GM12878 (cell line): ENCODE measurements at regions of chr14 and their contacts with region 1.

Region 1: DNA sequence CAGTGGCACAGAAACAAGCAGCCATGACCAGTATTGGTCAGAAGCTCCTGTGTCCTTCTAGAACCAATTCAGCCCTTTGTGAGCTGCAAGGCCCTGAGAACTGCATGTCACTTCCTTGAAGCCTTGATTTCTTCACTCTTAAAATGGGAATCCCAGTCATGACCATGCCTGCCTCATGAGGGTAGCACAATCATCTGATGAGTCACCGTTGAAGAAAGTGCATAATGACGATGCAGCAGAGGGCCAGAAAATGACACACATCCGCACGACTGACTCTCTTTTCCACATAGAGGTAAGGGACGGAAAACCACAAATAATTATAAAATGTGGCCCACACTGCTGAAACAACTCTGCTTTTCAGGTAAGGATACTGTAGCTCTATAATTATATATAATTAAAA is 777.4 kb downstream of the BCL11B start:
- DNase-seq: no peak
- ATAC-seq: no peak; the same call in 2 of the 3 replicates
- H3K4me3 ChIP-seq: no peak overlapping the region
- H3K27ac ChIP-seq: no peak overlapping the region
- H3K4me1 ChIP-seq: no peaks in the 10 kb centered on the region
- H3K27me3 ChIP-seq: no peaks in the 10 kb centered on the region
- CTCF ChIP-seq: no peak
- EP300 ChIP-seq: no peak
- POLR2A ChIP-seq: no peak
- RAD21 ChIP-seq: no peak

Region 2: GRCh38 chr14:98444077-98444476 is 50.5 kb before region 1 on chr14:
- CTCF ChIA-PET with region 1: no interaction called
- POLR2A ChIA-PET with region 1: no interaction called
- RAD21 ChIA-PET with region 1: no interaction called
- SMC1A ChIA-PET with region 1: no interaction called
- in situ Hi-C with region 1: no loop called
- intact Hi-C with region 1: no loop called
- DNase-seq: no peak
- ATAC-seq: no peak
- H3K4me3 ChIP-seq: no peak overlapping the region
- H3K27ac ChIP-seq: no peak overlapping the region
- H3K4me1 ChIP-seq: no peaks in the 10 kb centered on the region
- H3K27me3 ChIP-seq: no peaks in the 10 kb centered on the region
- CTCF ChIP-seq: no peak
- EP300 ChIP-seq: no peak
- POLR2A ChIP-seq: no peak
- RAD21 ChIP-seq: no peak

Region 3: GRCh38 chr14:98477935-98478334 is 16.6 kb before region 1 on chr14:
- CTCF ChIA-PET with region 1: interaction called, 6 read pairs
- POLR2A ChIA-PET with region 1: no interaction called
- RAD21 ChIA-PET with region 1: no interaction called
- SMC1A ChIA-PET with region 1: interaction called, 11 read pairs
- in situ Hi-C with region 1: no loop called
- intact Hi-C with region 1: no loop called
- DNase-seq: no peak
- ATAC-seq: no peak
- H3K4me3 ChIP-seq: no peak overlapping the region
- H3K27ac ChIP-seq: no peak overlapping the region
- H3K4me1 ChIP-seq: no peaks in the 10 kb centered on the region
- H3K27me3 ChIP-seq: no peaks in the 10 kb centered on the region
- CTCF ChIP-seq: no peak
- EP300 ChIP-seq: no peak
- POLR2A ChIP-seq: no peak
- RAD21 ChIP-seq: no peak

Region 4: DNA sequence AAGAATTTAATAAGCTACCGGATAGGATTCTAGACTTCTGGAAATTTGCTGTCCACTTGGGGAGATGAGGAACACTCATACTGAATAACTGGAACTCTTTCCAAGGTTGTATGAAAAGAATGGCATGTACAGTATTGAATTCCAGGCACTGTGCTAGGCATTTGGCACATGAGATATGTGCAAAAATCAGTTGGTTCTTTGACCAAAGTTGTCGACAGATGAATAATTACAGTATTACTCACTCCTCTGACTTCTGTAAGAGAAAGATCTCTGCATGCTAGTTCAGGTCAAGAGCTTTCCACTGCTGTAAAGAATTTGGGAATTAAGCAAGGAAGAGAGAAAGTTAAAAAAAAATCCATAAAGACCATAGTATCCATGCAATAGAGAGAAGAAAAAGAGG is 12.7 kb after region 1 on chr14:
- CTCF ChIA-PET with region 1: interaction called, 4 read pairs
- POLR2A ChIA-PET with region 1: no interaction called
- RAD21 ChIA-PET with region 1: interaction called, 4 read pairs
- SMC1A ChIA-PET with region 1: interaction called, 10 read pairs
- in situ Hi-C with region 1: no loop called
- intact Hi-C with region 1: no loop called
- DNase-seq: no peak
- ATAC-seq: no peak
- H3K4me3 ChIP-seq: no peak overlapping the region
- H3K27ac ChIP-seq: no peak overlapping the region
- H3K4me1 ChIP-seq: no peaks in the 10 kb centered on the region
- H3K27me3 ChIP-seq: no peaks in the 10 kb centered on the region
- CTCF ChIP-seq: no peak
- EP300 ChIP-seq: no peak
- POLR2A ChIP-seq: no peak
- RAD21 ChIP-seq: no peak